Activated T-helper 1 cell treated with anti-CD3 and anti-CD28 coated beads, Interleukin-12 subunit alpha, Interleukin-12 subunit beta, Interleukin-2, Interleukin-4 antibody, amounts not matched to agents 30 ng/mL and 10 ng/mL and 1 ng/mL, durations not matched to agents 14 hours and 24 hours and 36 hours (primary cell): ENCODE measurements at regions of chr1 and their contacts with region 1.

Region 1: DNA sequence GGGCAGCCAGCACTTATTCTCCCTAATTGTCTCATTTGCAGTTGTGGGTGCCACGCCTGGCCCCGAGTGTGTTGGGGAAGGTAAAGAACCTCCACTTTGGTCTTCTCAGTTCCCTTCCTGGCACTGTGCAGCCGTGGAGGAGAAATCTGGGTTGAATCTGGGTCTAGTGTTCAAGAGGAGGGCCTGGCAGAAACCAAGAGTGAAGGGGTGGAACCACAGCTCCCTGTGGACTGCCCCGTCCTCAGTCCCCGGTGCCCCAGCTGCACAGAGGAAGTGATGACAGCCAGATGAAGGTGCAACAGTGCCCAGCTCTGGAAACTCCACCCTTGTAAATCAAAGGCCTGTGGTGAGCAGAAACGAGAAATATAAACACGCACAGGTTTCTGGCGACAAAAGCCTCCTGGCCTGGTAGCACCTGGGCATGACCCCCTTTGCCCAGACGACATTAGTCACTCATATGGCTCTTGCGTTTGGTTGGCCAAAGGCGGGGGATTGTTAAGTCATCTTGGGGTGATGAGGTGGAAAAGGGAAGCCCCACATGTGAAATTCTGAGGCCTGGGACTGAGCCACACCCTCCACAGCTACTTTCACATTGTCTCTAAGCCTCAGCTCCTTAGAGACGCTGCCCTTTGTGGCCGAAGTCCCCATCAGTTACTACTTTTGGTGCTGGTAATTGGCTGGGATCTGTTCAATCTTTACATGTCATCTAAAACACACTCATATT is 4.2 kb upstream of the ECE1 start:
- DNase-seq: peak; percentile 79
- H3K4me3 Mint-ChIP-seq: peak overlapping the region; percentile 76
- H3K27ac Mint-ChIP-seq: peak overlapping the region; percentile 95
- H3K4me1 Mint-ChIP-seq: peaks cover 80% of the 10 kb centered on the region
- H3K27me3 Mint-ChIP-seq: no peaks in the 10 kb centered on the region

Region 2: GRCh38 chr1:20661207-20662109 is 633.0 kb before region 1 on chr1 and contains the start of gene DDOST:
- intact Hi-C with region 1: loop called (anchors 1 kb)
- DNase-seq: peak; percentile 94
- H3K4me3 Mint-ChIP-seq: peak within 1 kb of the TSS; percentile 97
- H3K27ac Mint-ChIP-seq: peak within 1 kb of the TSS; percentile 97
- H3K4me1 Mint-ChIP-seq: peaks cover 45% of the 10 kb centered on the region
- H3K27me3 Mint-ChIP-seq: no peaks in the 10 kb centered on the region
- total RNA-seq, gene DDOST: 167 and 174 TPM in 2 replicates

Region 3: DNA sequence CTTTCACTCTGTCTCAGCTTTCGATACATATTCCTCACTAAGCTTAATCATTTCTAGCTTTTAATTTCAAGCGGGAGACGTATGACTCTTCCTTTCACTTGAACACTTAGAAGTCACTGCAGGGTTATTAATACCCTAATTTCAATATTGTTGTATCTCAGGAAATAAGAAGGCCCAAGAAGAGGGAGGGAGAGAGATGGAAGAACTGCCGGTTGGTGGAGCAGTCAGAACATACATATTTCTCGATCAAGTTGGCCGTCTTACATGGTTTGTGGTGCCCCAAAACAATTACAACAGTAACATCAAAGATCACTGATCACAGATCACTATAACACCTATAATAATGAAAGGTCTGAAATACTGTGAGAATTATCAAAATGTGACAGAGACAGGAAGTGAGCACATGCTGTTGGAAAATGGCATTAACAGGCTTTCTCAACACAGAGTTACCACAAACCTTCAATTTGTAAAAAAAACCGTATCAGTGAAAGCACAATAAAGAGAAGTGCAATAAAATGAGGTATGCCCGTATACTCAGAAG is 361.9 kb before region 1 on chr1:
- intact Hi-C with region 1: loop called (anchors 1 kb)
- DNase-seq: no peak
- H3K4me3 Mint-ChIP-seq: peak overlapping the region; percentile 19
- H3K27ac Mint-ChIP-seq: peak overlapping the region; percentile 78
- H3K4me1 Mint-ChIP-seq: peaks cover 19% of the 10 kb centered on the region
- H3K27me3 Mint-ChIP-seq: no peaks in the 10 kb centered on the region

Region 4: GRCh38 chr1:20948101-20948500 is 346.3 kb before region 1 on chr1:
- intact Hi-C with region 1: no loop called
- DNase-seq: no peak
- H3K4me3 Mint-ChIP-seq: no peak overlapping the region
- H3K27ac Mint-ChIP-seq: no peak overlapping the region
- H3K4me1 Mint-ChIP-seq: no peaks in the 10 kb centered on the region
- H3K27me3 Mint-ChIP-seq: no peaks in the 10 kb centered on the region

Region 5: DNA sequence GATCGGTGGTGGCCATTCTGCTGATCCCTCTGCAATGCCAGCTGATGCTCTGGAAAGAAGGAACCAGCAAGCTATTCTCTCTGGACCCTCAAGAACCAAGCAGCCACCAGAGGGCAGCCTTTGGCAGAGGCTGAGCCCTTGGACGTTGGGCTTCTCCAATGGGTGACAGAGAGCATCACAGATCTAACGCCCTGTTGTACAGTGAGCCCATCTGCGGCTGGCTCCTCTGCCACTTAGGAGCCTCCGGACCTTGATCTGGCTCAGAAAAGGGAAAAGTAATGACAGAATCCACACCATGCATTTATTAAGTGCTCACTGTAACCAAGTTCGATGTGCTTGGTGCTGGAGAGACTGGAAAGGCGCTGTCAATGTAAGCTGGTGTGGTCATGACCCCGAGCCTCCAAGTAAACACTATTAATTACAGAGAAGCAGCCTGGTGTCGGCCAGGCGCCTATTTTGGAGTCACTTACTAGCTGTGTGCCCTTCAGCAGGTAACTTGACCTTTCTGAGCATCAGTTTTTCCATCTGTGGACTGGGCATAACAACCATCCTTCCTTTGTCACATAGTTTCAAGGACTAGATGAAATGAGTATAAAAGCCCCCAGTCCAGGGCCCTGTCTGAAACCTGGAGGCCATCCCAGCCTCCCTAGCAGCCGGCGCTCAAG is 39.0 kb before region 1 on chr1:
- intact Hi-C with region 1: loop called (anchors 2 kb)
- DNase-seq: peak; percentile 57
- H3K4me3 Mint-ChIP-seq: no peak overlapping the region
- H3K27ac Mint-ChIP-seq: peak overlapping the region; percentile 75
- H3K4me1 Mint-ChIP-seq: peaks cover 43% of the 10 kb centered on the region
- H3K27me3 Mint-ChIP-seq: no peaks in the 10 kb centered on the region

Region 6: GRCh38 chr1:21280011-21280471 is 14.4 kb before region 1 on chr1:
- intact Hi-C with region 1: loop called (anchors 1 kb)
- DNase-seq: no peak
- H3K4me3 Mint-ChIP-seq: peak overlapping the region; percentile 72
- H3K27ac Mint-ChIP-seq: peak overlapping the region; percentile 92
- H3K4me1 Mint-ChIP-seq: peaks cover 39% of the 10 kb centered on the region
- H3K27me3 Mint-ChIP-seq: no peaks in the 10 kb centered on the region

Region 7: DNA sequence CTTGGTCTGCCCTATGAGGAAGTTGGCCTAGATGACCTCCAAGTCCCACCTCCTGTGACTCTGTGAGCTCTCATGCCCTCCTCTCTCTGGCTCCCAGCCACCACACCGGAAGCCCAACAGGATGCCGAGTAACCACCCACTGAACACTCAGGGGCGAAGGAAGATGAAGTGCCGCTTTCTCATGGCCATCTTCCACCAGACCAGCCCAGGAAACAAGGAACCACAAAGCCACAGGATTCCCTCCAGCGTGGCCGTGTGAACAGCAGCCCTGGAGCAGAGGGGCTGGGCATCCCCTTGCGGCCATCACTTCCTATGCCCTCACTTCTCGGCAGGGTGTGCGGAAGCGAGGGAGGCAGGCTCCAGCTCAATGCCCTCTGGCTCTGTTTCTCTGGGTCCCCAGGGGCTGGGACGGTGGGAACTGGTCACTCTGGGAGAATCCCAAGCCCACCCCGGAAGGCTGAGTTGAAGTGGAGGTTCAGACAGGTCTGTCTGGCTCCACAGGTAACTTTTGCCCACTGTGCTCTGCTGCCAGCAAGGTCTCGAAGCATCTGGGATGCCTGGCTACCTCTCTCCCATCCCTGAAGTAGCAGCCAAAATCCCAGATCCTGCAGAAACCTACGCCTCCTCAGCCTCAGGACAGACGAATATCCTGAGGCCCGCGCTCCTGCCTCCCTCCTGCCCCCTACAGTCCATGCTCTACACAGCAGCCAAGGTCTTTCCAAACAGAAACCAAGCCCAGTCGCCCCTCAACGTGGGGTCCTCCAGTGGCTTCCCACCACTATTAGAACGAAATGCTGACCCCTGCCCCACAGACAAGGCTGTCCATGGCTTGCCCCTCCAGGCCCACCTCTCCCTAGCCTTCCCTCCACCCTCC is 40.0 kb after region 1 on chr1:
- intact Hi-C with region 1: loop called (anchors 1 kb)
- DNase-seq: peak; percentile 80
- H3K4me3 Mint-ChIP-seq: peak overlapping the region; percentile 84
- H3K27ac Mint-ChIP-seq: peak overlapping the region; percentile 95
- H3K4me1 Mint-ChIP-seq: peaks cover 85% of the 10 kb centered on the region
- H3K27me3 Mint-ChIP-seq: no peaks in the 10 kb centered on the region

Region 8: GRCh38 chr1:21439721-21440629 is 145.5 kb after region 1 on chr1 and contains the start of gene NBPF3:
- intact Hi-C with region 1: loop called (anchors 1 kb)
- DNase-seq: peak; percentile 82
- H3K4me3 Mint-ChIP-seq: peak within 1 kb of the TSS; percentile 91
- H3K27ac Mint-ChIP-seq: peak within 1 kb of the TSS; percentile 80
- H3K4me1 Mint-ChIP-seq: peaks cover 16% of the 10 kb centered on the region
- H3K27me3 Mint-ChIP-seq: peaks cover 29% of the 10 kb centered on the region
- total RNA-seq, gene NBPF3: 3.3 and 3.4 TPM in 2 replicates

Region 9: DNA sequence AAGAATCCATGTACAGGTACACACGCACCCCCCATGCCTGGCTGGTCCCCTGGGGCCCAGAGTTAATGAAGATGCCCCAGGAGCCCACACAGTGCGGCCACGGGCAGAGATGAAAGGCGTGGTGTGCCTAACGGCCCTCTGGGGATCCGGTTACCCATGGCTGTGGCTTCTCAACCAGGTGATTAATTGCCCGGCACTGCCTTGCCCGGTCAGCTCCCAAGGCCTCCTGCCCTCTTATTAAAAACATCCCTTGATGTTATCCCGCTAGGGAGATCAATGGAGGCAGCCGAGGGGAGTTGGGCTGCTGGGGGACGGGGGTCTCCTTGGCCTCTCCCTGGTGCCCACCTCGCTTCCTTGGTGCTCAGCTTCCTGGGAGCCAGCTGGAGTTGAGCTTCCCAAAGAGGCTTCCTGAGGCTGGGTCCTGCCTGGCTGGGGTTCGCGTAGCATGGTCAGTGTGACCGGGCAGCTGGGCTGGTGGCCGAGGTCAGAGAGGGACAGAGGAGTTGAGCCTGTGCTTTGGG is 923.5 kb after region 1 on chr1:
- intact Hi-C with region 1: no loop called
- DNase-seq: no peak
- H3K4me3 Mint-ChIP-seq: no peak overlapping the region
- H3K27ac Mint-ChIP-seq: no peak overlapping the region
- H3K4me1 Mint-ChIP-seq: no peaks in the 10 kb centered on the region
- H3K27me3 Mint-ChIP-seq: peaks cover 6% of the 10 kb centered on the region